Calu3 (cell line): ENCODE measurements at regions of chr1 and their contacts with region 1.

Region 1: DNA sequence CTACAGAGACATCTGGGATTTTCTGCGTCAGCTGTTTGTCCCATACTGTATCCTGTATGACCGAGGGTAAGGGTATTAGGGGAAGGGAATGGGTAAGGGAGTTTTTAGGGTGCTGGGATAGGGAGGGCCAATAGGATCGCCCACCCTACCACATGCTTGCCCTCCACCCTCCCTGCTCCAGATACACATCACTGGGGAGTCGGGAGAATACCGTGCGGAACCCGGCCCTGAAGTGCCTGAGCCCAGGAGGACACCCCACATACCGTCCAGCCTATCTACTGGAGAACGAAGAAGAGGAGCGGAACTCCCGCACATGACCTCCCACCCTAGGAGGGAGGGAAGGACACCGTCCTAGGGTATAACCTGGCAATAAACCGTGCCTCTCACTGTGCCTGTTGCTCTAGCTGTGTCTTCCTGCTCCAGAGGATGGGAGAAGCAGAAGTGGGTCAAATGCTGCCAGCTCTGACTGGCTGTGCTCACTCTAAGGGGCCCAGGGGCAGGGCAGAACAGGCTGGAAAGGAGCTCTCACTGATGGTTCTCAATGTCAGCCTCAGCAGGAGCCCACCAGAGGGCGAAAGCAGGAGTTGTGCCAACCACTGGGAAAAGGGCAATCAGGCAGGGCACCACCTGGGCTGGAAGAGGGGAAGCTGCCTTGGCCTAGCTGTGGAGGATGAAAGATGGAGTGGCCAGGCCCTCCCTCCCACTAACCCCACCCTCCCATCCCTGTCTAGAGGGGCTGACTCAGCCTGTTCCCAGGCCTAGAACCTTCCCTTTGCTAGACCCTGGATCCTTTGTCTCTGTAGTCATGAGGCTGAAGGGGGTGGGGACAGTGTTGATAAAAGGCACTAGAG is 440 bp upstream of the LENEP start:
- DNase-seq: peak; percentile 56
- H3K4me3 Mint-ChIP-seq: no peak overlapping the region
- H3K27ac Mint-ChIP-seq: no peak overlapping the region
- H3K4me1 Mint-ChIP-seq: peaks cover 11% of the 10 kb centered on the region
- H3K27me3 Mint-ChIP-seq: no peaks in the 10 kb centered on the region
- CTCF ChIP-seq: no peak

Region 2: GRCh38 chr1:154837672-154838171 is 155.2 kb before region 1 on chr1:
- CTCF ChIA-PET with region 1: no interaction called
- intact Hi-C with region 1: no loop called
- DNase-seq: no peak
- H3K4me3 Mint-ChIP-seq: no peak overlapping the region
- H3K27ac Mint-ChIP-seq: no peak overlapping the region
- H3K4me1 Mint-ChIP-seq: no peaks in the 10 kb centered on the region
- H3K27me3 Mint-ChIP-seq: peaks cover 93% of the 10 kb centered on the region
- CTCF ChIP-seq: no peak

Region 3: DNA sequence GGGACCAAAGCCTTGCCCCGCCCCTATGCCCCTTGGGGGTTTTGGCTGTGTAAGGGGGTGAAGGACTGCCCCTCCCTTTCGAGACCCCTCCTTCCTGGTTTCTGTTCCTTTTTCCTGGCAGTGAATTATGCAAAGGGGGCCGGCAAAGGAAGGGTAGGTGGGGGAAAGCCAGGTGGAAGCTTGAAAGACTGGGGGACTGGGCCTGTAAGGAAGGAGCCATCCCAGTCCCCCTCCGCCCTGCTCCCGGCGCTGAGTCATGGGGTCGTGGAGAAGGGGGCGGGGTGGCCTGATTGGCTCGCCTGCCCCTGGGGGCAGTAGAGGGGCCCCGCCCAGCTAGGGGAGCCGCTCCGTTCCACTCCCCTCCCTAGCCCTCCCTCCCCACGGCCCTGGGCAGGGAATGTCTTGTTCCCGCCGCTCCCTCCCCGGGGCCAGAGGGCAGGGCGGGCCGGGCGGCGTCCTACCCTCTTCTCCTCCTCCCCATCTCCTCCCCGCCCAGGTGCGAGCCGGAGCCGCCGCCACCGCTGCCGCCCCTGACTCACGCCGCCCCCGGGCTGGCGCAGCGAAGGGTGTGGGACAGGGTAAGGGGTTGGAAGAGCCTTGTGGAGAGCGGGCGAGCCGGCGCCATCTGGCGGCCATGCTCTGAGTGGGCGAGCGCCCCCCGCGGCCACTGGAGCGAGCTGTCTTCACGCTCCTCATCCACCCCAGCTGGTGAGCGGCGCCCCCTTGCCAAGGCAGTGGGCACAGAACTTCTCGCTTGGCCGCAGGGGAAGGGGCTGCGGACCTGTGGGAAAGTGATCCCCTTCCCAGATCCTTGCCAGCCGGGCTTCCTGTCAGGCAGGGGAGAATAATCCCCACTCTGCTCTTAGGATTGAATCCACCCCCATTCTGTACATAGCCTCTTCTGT is 24.3 kb after region 1 on chr1:
- CTCF ChIA-PET with region 1: interaction called, 13 read pairs
- intact Hi-C with region 1: no loop called
- DNase-seq: peak; percentile 96
- H3K4me3 Mint-ChIP-seq: peak overlapping the region; percentile 60
- H3K27ac Mint-ChIP-seq: peak overlapping the region; percentile 79
- H3K4me1 Mint-ChIP-seq: peaks cover 37% of the 10 kb centered on the region
- H3K27me3 Mint-ChIP-seq: no peaks in the 10 kb centered on the region
- CTCF ChIP-seq: peak; percentile 99

Region 4: DNA sequence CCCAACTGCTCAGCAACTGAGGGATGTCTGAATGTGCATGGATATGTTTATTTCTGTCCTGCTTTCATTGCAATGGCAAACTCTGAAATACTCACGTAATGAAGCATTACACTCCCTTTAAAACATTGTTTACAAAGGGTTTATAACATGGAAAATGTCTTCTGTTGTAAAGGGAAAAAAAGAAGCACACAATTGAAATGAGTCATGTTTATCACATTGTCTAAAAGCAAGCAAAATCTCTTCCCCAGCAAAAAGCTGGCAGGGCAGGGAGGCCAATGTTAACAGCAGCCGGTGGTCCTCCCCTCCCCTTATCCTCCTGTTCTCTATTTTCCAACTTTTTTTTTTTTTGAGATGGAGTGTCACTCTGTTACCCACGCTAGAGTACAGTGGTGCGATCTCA is 130.9 kb after region 1 on chr1:
- CTCF ChIA-PET with region 1: no interaction called
- intact Hi-C with region 1: no loop called
- DNase-seq: no peak
- H3K4me3 Mint-ChIP-seq: no peak overlapping the region
- H3K27ac Mint-ChIP-seq: no peak overlapping the region
- H3K4me1 Mint-ChIP-seq: peaks cover 50% of the 10 kb centered on the region
- H3K27me3 Mint-ChIP-seq: peaks cover 26% of the 10 kb centered on the region
- CTCF ChIP-seq: no peak